Uterus (tissue), 4 donors: ENCODE measurements at regions of chr10 and their contacts with region 1.

Region 1: GRCh38 chr10:102583435-102584417 is 60.6 kb upstream of the TRIM8 start:
- DNase-seq: peak; percentile 83 to 89
- H3K4me3 ChIP-seq: no peak overlapping the region
- H3K27ac ChIP-seq: no peak overlapping the region
- H3K4me1 ChIP-seq: no peaks in the 10 kb centered on the region
- H3K27me3 ChIP-seq: no peaks in the 10 kb centered on the region
- CTCF ChIP-seq: peak; percentile 87 to 91 (median 89)
- POLR2A ChIP-seq: no peak

Region 2: DNA sequence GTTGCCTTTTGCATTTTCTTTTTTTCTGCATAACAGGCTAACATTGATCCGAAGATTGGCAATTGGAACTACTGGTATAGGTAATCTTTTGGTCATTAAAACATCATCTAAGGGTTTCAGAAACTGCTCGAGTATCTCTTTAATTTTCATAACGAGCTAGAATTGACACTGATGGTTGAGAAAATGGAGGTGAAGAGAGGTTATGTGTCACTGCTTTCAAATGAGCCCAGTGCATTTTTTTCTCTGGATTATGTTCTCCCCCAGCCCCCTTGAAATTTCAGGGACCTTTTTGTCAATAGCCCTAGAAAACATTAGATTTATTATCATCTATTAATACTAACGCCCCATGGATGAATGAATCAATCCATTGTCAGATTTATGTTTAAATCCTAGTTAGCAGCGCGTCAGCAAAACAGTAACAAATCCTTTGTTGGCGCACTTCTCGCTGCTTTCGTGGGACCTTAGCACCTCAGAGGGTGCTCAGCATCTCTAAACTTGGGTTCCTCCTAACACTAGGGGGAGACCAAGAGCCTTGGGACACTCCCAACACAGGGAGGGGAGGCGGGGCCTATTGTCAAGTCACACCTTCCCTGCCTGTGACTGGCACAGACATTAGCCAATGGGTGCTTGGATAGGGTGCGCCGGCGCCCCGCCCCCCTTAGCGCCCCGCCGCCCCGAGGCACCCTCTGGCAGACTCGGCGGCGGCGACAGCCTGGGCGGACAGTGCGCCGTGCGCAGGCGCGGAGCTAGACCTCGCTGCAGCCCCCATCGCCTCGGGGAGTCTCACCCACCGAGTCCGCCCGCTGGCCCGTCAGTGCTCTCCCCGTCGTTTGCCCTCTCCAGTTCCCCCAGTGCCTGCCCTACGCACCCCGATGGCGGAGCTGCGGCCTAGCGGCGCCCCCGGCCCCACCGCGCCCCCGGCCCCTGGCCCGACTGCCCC is 80.2 kb before region 1 on chr10 and contains the start of gene SUFU:
- intact Hi-C with region 1: loop called (anchors 10 kb)
- DNase-seq: peak; percentile 98 to 99
- H3K4me3 ChIP-seq: peak within 1 kb of the TSS; percentile 95 to 99
- H3K27ac ChIP-seq: peak within 1 kb of the TSS; percentile 87 to 95
- H3K4me1 ChIP-seq: no peaks in the 10 kb centered on the region
- H3K27me3 ChIP-seq: no peaks in the 10 kb centered on the region
- CTCF ChIP-seq: peak; percentile 85 to 93 (median 90)
- POLR2A ChIP-seq: peak; percentile 67 to 79
- total RNA-seq, gene SUFU: 2.8 to 20.7 (median 12.3) TPM